A549 (cell line): ENCODE measurements at regions of chr3 and their contacts with region 1.

Region 1: DNA sequence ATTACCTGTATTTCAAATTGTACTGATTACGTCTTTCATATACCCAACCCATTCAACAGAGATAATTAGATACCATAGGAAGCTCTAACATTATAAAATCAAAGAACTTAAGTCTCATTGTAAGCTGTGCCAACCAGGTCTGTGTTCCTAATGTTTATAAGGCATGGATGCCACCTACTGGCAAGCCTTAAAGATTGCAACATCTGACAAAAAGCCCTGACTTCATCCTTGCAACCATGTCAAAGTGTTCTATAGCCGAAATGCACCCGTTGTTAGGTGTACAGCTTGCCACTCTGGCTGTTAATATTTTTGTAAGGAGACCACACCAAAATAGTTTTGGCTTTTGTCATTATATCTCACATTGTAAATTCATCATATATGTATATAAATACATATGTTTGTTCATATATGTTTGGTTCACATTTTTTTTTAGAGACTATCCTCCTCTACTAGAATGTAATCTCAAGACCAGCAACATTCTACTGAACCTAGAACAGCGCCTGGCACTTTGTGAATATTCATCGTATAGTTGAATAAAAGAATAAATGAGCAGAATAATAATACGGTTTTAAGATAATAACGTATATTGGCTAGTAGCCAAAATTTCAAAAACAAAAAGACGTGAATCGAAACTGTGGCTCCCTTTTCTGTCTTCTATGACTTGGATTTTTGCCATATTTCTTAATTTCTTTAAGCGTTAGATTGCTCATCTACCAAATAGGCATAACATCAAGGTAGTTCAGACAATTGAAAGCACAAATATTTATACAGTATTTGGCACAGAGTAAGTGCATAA is 258.1 kb downstream of the TBL1XR1 start:
- DNase-seq: peak; percentile 43 to 69
- ATAC-seq: peak; percentile 90 to 94
- H3K4me3 ChIP-seq: no peak overlapping the region
- H3K27ac ChIP-seq: no peak overlapping the region
- H3K4me1 ChIP-seq: no peaks in the 10 kb centered on the region
- CTCF ChIP-seq: peak; percentile 75
- EP300 ChIP-seq: no peak
- POLR2A ChIP-seq: no peak
- RAD21 ChIP-seq: peak; percentile 76 to 82

Region 2: DNA sequence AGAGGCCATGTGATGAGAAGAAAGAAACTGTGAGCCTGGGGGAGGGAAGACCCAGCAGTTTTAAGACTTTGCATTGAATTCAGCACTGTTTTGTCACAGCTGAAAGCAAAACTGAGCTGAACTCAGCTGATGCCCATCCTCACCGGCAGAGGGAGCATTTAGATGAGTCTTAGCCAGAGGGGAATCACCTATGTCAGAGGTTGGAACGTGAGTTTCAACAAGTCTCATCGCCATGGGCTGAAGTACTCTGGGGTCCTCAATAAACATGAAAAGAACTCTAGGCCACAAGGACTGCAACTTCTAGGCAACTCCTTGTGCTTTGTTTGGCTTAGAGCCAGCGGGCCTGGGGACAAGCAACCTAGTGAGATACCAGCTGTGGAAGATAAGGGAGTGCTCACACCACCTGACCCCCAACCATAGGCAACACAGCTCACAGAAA is 66.4 kb before region 1 on chr3:
- CTCF ChIA-PET with region 1: interaction called, 11 read pairs
- POLR2A ChIA-PET with region 1: no interaction called
- DNase-seq: peak in 1 of 2 experiments; percentile 44
- ATAC-seq: peak; percentile 81 to 88
- H3K4me3 ChIP-seq: no peak overlapping the region
- H3K27ac ChIP-seq: no peak overlapping the region
- H3K4me1 ChIP-seq: no peaks in the 10 kb centered on the region
- CTCF ChIP-seq: peak; percentile 49
- EP300 ChIP-seq: no peak
- POLR2A ChIP-seq: no peak
- RAD21 ChIP-seq: peak; percentile 43 to 64

Region 3: GRCh38 chr3:176927706-176928581 is 11.3 kb before region 1 on chr3:
- CTCF ChIA-PET with region 1: interaction called, 14 read pairs
- POLR2A ChIA-PET with region 1: no interaction called
- DNase-seq: no peak
- ATAC-seq: no peak
- H3K4me3 ChIP-seq: no peak overlapping the region
- H3K27ac ChIP-seq: no peak overlapping the region
- H3K4me1 ChIP-seq: no peaks in the 10 kb centered on the region
- CTCF ChIP-seq: no peak
- EP300 ChIP-seq: no peak
- POLR2A ChIP-seq: no peak
- RAD21 ChIP-seq: no peak